ENCODE measurements at regions of chr3 and their contacts with region 1.

Region 1: DNA sequence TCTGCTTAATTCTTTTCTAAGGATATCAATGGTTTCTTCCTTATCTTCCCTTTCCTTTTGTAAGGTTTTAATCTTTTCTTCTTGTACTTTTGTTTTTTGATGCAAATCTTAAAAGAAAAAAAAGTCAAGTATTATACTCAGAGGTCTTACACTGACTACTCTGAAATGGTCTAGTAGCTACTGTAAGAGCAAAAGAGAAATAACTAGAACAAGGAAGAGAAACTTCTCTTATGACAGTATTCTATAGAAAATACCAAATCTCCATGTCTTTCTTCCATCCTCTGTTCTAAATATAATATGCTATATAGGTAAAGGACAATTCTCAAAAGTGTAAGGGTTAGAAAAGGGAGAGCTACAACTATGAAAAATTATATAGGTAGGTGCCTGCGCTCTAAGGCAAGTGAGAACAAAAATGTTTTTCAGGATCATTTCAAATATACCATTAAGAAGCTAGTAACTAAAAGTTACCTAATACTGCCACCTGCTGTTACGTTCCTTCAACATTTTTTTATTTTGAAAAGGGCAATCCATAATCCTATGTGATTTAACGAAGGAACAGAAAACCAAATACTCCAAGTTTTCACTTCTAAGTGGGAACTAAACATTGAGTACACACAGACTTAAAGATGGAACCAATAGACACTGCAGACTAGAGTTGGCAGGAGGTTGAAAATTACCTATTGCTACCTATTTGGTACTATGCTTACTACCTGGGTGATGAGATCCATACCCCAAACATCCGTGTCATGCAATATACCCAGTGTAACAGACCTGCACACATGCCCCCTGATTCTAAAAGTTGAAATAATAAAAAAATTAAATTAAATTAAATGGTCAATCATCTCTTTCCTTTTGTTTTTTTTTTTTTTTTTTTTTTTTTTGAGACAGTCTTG is 36.7 kb downstream of the CIP2A start:
- DNase-seq: no peak
- H3K4me3 ChIP-seq: no peak overlapping the region
- H3K27ac ChIP-seq: no peak overlapping the region
- H3K4me1 ChIP-seq: no peaks in the 10 kb centered on the region
- H3K27me3 ChIP-seq: no peaks in the 10 kb centered on the region
- CTCF ChIP-seq: peak; percentile 45 to 65 (median 50)
- POLR2A ChIP-seq: no peak

Region 2: DNA sequence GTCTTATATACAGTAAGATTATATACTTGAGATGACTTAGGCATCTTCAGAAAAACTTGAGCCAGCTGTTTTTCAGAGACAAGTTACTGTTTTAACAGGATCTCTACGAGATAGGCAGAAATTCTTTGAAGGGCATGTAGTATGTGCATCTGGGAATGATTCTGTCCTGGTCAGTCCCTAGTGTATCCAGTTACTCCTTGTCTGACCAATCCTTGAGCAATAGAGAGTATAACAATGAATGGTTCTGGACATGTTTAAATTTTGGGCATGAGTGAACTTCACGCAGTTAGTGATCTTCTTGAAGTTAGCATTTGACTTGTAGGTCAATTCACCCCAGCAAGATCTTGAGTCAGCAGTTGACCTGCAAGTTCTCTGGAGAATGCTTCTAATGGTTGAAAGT is 280.9 kb before region 1 on chr3:
- intact Hi-C with region 1: no loop called
- DNase-seq: no peak
- H3K4me3 ChIP-seq: no peak overlapping the region
- H3K27ac ChIP-seq: no peak overlapping the region
- H3K4me1 ChIP-seq: no peaks in the 10 kb centered on the region
- H3K27me3 ChIP-seq: no peaks in the 10 kb centered on the region
- CTCF ChIP-seq: no peak
- POLR2A ChIP-seq: no peak

Region 3: DNA sequence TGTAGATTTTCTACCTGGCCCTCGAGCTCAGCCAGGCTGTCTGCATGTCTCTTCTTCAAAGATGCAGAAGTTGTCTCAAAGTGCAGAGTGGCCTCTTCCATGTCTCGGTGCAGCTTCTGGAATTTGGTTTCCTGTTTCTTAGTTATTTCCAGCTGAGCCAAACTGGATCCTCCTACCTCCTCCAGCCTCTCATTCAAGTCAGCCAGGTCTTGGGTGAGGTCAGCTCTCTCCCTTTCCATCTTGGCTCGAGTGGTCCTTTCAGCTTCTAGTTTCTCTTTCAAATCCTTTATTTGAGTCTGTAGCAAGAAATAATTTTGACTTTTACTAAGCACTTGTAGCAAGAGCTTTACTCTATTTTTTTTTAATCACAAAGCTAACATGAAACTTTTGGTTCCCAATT is 123.9 kb before region 1 on chr3:
- intact Hi-C with region 1: no loop called
- DNase-seq: no peak
- H3K4me3 ChIP-seq: no peak overlapping the region
- H3K27ac ChIP-seq: no peak overlapping the region
- H3K4me1 ChIP-seq: no peaks in the 10 kb centered on the region
- H3K27me3 ChIP-seq: no peaks in the 10 kb centered on the region
- CTCF ChIP-seq: no peak
- POLR2A ChIP-seq: no peak

Region 4: DNA sequence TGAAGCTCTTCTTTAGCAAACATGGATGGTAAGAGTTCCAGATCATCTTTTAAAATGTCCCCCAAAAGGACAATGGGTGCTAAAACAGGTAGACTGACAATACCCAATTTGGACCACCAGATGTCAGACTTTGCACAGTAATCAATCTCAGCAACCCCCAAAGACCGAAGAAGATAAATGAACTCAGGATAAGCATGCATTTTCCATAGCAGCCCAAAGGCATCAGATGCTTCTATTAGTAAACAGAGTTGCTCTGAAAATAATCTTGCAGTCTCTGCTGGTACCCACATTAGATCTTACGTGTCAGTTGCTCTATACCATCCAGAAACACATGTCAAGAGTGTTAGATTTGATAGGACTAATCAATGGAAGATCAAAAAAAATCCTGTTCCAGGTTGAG is 62.7 kb before region 1 on chr3:
- intact Hi-C with region 1: loop called (anchors 10 kb)
- DNase-seq: no peak
- H3K4me3 ChIP-seq: no peak overlapping the region
- H3K27ac ChIP-seq: no peak overlapping the region
- H3K4me1 ChIP-seq: no peaks in the 10 kb centered on the region
- H3K27me3 ChIP-seq: no peaks in the 10 kb centered on the region
- CTCF ChIP-seq: peak; percentile 54 to 81 (median 59)
- POLR2A ChIP-seq: no peak